Right ventricle myocardium inferior (tissue), 1 donor: ENCODE measurements at regions of chr5 and their contacts with region 1.

Region 1: GRCh38 chr5:150258130-150258529 is 31.4 kb downstream of the CAMK2A start:
- DNase-seq: no peak
- ATAC-seq: no peak

Region 2: GRCh38 chr5:150357326-150358260 is 99.5 kb after region 1 on chr5 and contains the start of gene TCOF1:
- intact Hi-C with region 1: loop called (anchors 5 kb)
- DNase-seq: peak; percentile 99
- ATAC-seq: peak; percentile 99
- total RNA-seq, gene TCOF1: 17.8 TPM

Region 3: GRCh38 chr5:150774145-150774544 is 516.0 kb after region 1 on chr5:
- intact Hi-C with region 1: no loop called
- DNase-seq: no peak
- ATAC-seq: no peak